Psoas muscle (tissue), 8 donors: ENCODE measurements at regions of chr6 and their contacts with region 1.

Region 1: DNA sequence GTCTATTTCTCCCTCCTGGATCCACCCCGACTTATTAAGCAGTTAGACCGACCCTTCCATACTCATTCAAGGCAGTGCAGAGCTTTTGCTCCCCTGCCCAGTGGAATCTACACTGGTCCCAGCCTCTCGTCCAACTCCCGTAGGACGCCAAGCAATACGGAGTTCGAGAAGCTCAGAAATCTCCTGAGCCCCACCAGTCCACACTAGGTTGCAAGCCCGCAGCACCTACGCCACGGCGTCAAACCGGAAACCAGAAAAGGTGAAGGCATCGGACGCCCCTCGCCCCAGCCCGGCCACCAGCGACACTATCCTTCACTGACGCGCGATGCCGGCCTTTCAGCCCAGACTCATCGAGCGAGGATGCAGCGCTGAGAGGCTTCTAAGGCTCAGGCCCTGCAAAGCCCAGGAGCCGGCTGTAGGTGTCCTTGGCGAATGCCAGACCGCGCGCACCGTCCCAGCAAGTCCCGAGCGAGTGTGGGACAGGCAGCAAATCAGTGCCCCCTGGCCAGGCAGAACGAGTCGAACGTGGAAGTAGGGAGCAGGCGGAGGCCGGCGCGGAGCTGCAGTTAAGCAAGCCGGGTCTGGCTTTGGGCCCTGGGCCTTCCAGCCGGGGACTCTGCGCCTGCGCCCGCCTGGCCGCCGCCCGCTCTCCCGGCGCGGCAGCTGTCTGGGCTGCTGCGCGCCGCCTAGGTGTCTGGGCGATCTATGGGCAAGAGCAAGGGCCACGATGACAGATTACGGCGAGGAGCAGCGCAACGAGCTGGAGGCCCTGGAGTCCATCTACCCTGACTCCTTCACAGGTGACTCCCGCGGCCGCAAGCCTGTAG is at the start of gene RWDD1:
- DNase-seq: peak; percentile 100
- ATAC-seq: peak; percentile 94 to 98 (median 97)
- H3K4me3 ChIP-seq: peak within 1 kb of the TSS; percentile 87
- H3K27ac ChIP-seq: peak within 1 kb of the TSS; percentile 90
- H3K4me1 ChIP-seq: peaks cover 28% of the 10 kb centered on the region
- H3K27me3 ChIP-seq: no peaks in the 10 kb centered on the region
- CTCF ChIP-seq: no peak
- total RNA-seq, gene RWDD1: 49.5 to 71.4 (median 69.3) TPM

Region 2: GRCh38 chr6:116667623-116668022 is 96.6 kb after region 1 on chr6:
- intact Hi-C with region 1: loop called in 1 of 2 experiments (anchors 5 kb)
- DNase-seq: no peak
- ATAC-seq: no peak
- H3K4me3 ChIP-seq: peak overlapping the region; percentile 94
- H3K27ac ChIP-seq: peak overlapping the region; percentile 83
- H3K4me1 ChIP-seq: peaks cover 18% of the 10 kb centered on the region
- H3K27me3 ChIP-seq: no peaks in the 10 kb centered on the region
- CTCF ChIP-seq: no peak

Region 3: DNA sequence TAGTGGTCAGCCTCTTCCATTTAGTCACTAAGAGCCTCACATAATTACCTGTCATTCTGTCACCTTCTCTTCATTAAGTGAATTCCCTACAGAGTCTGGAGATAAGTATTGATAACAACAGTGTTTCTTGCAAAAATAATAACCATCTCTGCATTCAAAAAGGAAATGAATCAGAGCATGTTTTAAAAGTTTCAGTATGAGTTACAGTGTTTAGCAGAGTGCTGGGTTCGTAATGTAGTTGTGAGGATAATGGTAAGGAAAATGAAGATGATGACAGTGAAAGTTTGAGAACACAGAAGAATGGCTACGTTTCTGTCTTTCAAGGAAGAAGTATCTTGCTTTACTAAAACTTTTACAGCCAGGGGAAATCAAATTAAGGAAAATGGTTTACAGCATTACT is 226.5 kb after region 1 on chr6:
- intact Hi-C with region 1: no loop called
- DNase-seq: no peak
- ATAC-seq: no peak
- H3K4me3 ChIP-seq: no peak overlapping the region
- H3K27ac ChIP-seq: no peak overlapping the region
- H3K4me1 ChIP-seq: no peaks in the 10 kb centered on the region
- H3K27me3 ChIP-seq: no peaks in the 10 kb centered on the region
- CTCF ChIP-seq: no peak

Region 4: DNA sequence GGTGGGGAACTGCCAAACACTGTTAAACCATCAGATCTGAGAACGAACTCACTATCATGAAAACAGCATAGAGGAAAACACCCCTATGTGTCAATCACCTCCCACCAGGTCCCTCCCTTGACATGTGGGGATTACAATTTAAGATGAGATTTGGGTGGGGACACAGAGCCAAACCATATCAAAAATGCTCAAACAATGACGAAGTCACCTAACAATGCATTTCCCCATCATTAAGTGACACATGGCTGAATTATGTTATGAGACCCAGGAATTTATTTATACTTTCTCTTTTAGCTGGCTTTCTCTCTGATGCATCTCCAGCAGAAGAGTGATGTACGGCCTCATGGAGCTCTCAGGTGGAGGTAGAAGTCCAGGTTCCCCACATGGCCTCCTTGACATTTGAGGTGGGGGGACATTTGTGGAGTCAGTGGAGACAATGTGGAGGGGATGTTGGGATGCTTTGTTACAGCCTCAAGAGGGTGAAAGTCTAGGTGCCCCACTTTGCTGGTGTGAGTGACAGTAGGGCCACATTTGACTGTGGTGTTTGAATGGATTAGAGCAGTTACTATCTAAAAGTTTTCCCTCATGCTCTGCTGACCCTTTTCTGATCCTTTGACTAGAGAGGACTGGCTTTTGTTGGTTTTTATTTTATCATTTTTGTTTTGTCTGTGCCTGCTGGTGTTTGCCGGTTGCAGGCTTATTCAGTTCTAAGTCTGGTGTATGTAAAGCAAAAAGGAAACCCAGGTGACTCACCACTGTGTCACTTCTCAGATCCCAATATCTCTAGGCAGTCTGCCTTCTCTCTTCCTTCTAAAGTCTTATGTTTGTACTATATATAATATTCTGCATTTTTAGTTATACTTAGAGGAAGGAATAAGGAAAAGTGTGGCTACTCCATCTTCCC is 892.9 kb after region 1 on chr6:
- intact Hi-C with region 1: no loop called
- DNase-seq: no peak
- ATAC-seq: no peak
- H3K4me3 ChIP-seq: no peak overlapping the region
- H3K27ac ChIP-seq: no peak overlapping the region
- H3K4me1 ChIP-seq: no peaks in the 10 kb centered on the region
- H3K27me3 ChIP-seq: no peaks in the 10 kb centered on the region
- CTCF ChIP-seq: no peak